AG04449 (cell line): ENCODE measurements at regions of chr5 and their contacts with region 1.

Region 1: GRCh38 chr5:175464074-175464941 is 14.1 kb upstream of the SFXN1 start:
- DNase-seq: no peak
- H3K4me3 ChIP-seq: no peak overlapping the region
- CTCF ChIP-seq: peak; percentile 83

Region 2: GRCh38 chr5:175321927-175322532 is 142.3 kb before region 1 on chr5:
- CTCF ChIA-PET with region 1: no interaction called
- POLR2A ChIA-PET with region 1: no interaction called
- DNase-seq: no peak
- H3K4me3 ChIP-seq: no peak overlapping the region
- CTCF ChIP-seq: no peak

Region 3: DNA sequence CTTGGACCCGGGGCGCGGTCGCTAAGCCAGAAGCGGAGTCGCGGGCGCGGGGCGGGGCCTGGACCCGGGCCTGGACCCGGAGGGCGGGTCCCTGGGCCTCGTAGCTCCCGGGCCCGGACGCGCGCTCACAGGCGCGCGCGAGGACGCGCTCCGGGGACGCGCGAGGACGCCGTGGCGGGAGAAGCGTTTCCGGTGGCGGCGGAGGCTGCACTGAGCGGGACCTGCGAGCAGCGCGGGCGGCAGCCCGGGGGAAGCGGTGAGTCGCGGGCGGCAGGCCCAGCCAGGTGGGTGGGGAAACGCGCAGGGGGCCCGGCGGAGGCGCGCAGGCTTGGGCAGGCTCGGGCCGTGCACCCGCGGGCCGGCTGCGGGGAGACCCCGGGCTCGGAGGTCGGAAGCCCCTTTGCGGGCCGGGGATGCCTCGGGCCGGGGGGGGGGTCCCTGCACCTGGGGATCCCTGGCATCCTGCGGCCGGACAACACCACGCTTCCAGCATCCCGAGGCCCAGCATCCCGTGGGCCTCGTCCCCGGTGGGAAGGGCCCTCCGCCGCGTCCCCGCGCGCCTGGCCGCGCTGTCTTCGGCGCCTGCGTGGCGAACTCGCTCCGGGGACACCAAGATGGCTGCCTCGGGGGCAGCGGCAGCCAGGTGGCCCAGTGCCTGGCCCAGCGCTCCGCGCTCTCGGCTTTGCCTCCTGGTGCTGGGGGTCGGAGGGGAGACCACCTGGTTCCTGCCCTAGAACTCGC is 14.2 kb after region 1 on chr5 and contains the start of gene SFXN1:
- CTCF ChIA-PET with region 1: interaction called, 18 read pairs
- POLR2A ChIA-PET with region 1: interaction called, 3 read pairs
- DNase-seq: no peak
- H3K4me3 ChIP-seq: peak within 1 kb of the TSS; percentile 68
- CTCF ChIP-seq: no peak